Activated naive CD4-positive, alpha-beta T cell treated with anti-CD3 and anti-CD28 coated beads for 36 hours (primary cell): ENCODE measurements at regions of chr9 and their contacts with region 1.

Region 1: DNA sequence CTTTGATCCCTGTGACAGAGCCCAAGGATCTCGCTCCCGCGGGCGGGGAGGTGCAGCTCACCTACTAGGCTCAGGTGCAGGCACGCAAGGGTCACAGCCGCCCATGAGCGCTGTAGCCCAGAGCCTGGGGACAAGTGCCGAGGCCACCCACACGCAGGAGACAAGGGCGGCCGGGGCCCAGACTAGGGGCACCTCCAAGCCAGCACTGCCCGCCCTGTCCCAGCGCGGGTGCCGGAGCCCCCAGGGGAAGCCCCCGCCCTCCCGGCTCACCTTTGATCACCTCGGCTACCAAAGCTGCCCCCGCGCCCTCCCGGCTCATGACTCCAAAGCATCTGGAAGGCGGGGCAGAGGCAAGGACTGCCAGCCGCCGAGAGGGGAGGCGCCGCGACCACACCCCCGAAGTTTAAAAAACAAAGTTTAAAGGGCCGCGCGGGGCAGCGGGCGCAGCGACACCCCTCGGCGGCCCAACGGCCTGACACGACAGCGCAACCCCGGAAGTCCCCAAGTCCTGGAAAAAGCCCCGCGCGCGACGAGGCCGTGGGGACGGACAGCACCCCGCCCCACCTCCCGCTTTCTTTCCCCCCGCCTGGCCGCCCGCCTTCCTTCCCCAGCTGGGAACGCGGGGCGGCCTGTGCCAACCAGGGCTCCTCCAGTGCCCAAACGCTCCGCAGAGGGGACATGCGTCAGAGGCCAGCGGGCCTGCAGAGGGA is 53.0 kb downstream of the CDC14B start:
- DNase-seq: peak; percentile 76
- H3K4me3 Mint-ChIP-seq: peak overlapping the region; percentile 72
- H3K27ac Mint-ChIP-seq: no peak overlapping the region
- H3K4me1 Mint-ChIP-seq: peaks cover 23% of the 10 kb centered on the region
- H3K27me3 Mint-ChIP-seq: no peaks in the 10 kb centered on the region

Region 2: GRCh38 chr9:96327694-96328352 is 238.8 kb before region 1 on chr9:
- CTCF ChIA-PET with region 1: no interaction called
- intact Hi-C with region 1: loop called (anchors 2 kb)
- DNase-seq: peak; percentile 70
- H3K4me3 Mint-ChIP-seq: no peak overlapping the region
- H3K27ac Mint-ChIP-seq: no peak overlapping the region
- H3K4me1 Mint-ChIP-seq: no peaks in the 10 kb centered on the region
- H3K27me3 Mint-ChIP-seq: no peaks in the 10 kb centered on the region

Region 3: DNA sequence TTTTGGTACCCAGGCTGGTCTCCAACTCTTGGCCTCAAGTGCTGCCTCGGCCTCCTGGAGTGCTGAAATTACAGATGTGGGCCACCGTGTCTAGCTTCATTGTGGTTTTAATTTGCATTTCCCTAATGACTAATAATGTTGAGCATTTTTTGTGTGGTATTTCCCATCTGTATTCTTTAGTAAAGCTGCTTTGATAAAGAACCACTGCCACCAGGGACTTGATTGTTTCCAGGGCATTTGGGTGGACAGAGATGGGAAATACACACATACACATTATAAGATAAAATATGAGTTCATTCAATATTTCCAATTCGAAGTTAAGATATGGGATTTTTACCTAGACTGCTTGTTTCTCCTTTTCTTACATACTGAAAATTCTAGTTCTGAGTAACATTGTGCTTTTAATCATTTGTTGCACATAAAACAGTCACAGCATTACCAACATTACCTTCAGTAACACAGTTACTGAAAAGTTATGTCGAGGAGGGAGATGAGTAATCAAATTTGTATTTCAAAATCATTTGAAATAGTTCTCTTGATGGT is 87.8 kb before region 1 on chr9:
- CTCF ChIA-PET with region 1: interaction called, 10 read pairs
- intact Hi-C with region 1: loop called (anchors 1 kb)
- DNase-seq: peak; percentile 60
- H3K4me3 Mint-ChIP-seq: no peak overlapping the region
- H3K27ac Mint-ChIP-seq: peak overlapping the region; percentile 88
- H3K4me1 Mint-ChIP-seq: peaks cover 33% of the 10 kb centered on the region
- H3K27me3 Mint-ChIP-seq: no peaks in the 10 kb centered on the region

Region 4: DNA sequence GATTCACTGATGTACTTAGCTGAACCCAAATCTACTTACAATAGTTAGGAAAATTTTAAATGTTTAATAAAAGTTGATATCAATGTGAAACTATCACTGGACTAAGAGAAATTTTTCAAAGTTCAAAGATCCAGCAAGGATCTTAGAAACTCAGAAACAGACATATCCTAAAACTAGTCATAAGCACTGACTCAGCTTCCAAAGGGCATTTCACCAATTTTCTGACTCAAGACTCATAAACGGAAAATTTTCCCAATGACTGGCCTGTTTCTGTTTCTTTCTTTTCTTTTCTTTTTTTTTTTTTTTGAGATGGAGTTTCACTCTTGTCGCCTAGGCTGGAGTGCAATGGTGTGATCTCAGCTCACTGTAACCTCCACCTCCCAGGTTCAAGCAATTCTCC is 13.6 kb before region 1 on chr9:
- CTCF ChIA-PET with region 1: interaction called, 7 read pairs
- intact Hi-C with region 1: loop called (anchors 1 kb)
- DNase-seq: no peak
- H3K4me3 Mint-ChIP-seq: no peak overlapping the region
- H3K27ac Mint-ChIP-seq: no peak overlapping the region
- H3K4me1 Mint-ChIP-seq: peaks cover 36% of the 10 kb centered on the region
- H3K27me3 Mint-ChIP-seq: no peaks in the 10 kb centered on the region